ENCODE measurements at regions of chr15 and their contacts with region 1.

Region 1: DNA sequence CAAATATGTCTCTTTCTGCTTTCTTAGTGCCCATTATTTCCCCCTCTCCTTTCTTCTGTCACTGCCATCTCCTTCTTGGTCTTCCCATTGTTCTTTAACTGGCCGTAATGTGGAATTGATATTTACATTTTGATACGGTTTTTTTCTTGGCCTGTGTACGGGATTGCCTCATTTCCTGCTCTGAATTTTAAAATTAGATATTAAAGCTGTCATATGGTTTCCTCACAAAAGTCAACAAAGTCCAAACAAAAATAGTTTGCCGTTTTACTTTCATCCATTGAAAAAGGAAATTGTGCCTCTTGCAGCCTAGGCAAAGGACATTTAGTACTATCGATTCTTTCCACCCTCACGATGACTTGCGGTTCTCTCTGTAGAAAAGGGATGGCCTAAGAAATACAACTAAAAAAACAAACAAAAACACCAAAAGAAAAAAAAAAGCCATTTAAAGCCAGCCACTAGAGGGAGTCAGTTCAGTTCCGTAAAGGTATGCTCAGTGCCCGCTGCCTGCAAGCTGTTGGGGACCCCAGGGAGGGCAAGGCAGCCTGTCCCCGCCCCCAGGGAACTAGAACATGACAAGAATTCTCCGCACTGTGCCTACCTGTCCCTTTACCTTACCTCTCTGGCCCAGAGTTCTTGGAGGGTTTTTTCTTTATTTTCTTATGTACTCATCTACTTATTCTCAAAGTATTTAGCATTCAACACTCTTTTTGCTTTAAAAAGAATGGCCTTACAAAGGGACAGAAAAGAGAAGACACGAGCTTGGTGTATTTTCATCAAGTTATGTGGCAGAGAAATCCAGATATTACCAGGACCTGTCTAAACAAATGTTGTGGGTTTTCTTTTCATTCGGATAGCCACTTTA is 30.0 kb upstream of the NR2E3 start:
- DNase-seq: no peak
- ATAC-seq: peak in 3 of 4 donors; percentile 19 to 34 (median 25)
- H3K4me3 ChIP-seq: peak overlapping the region in 1 of 12 donors; percentile 18
- H3K27ac ChIP-seq: peak overlapping the region in 4 of 12 donors; percentile 6 to 55 (median 24)
- H3K4me1 ChIP-seq: peaks cover 0 to 37% (median 2%) of the 10 kb centered on the region in 12 donors
- H3K27me3 ChIP-seq: no peaks in the 10 kb centered on the region
- CTCF ChIP-seq: peak; percentile 48 to 76 (median 63)
- POLR2A ChIP-seq: no peak

Region 2: DNA sequence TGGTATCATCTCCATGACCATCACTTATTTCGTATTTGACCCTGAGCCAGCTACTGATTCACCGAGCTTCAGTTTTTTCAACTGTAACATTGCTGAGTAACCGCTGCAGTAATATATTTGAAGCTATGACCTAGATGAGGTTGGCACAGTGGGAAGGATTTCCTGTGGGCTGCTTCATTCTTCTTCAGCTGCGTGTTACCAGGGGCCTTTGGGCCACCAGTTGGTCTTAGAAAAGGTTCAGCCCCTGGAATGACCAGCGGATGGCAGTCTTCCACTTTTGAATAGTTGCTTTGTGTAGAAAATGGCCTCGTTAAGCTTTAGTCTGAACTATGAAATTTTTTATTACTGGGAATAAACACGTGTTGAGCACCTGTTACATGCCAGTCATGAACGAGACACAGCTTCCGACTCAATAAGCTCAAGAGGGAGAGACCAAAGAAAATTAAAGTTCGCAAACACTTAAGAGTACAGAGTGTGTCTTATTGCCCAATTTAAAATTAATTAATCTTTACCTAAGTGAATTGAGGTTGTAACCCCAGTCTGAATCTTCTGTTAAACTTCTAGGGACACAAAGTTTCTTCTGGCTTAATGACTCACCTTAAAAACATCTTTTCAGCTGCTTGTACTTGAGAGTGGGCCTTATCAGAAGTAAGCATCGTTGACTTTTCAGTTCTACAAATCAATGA is 27.6 kb before region 1 on chr15:
- intact Hi-C with region 1: loop called in 1 of 10 experiments (anchors 5 kb)
- DNase-seq: no peak
- ATAC-seq: peak in 2 of 4 donors; percentile 35 to 59
- H3K4me3 ChIP-seq: no peak overlapping the region
- H3K27ac ChIP-seq: no peak overlapping the region
- H3K4me1 ChIP-seq: peaks cover 0 to 20% (median 3%) of the 10 kb centered on the region in 12 donors
- H3K27me3 ChIP-seq: no peaks in the 10 kb centered on the region
- CTCF ChIP-seq: peak in 10 of 12 donors; percentile 16 to 56 (median 31)
- POLR2A ChIP-seq: no peak

Region 3: DNA sequence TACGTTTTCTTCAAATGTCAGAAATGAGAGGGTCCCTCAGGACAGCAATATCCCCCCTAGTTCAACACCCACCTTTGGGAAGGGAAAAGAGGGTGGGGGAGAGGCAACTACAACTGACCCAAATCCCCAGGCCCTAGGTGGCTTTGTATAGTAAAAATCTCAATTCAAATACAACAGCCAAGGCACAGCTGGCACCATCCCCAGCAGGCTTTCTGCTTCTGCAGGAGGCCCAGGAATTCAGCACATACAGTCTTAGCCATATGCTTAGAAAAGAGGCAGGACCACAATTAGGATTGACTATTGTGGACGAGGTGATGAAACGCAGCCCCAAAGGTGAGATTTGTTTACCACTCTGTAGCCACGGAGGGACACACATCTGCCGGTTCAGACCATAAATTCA is 45.9 kb after region 1 on chr15:
- intact Hi-C with region 1: no loop called
- DNase-seq: no peak
- ATAC-seq: no peak
- H3K4me3 ChIP-seq: no peak overlapping the region
- H3K27ac ChIP-seq: no peak overlapping the region
- H3K4me1 ChIP-seq: no peaks in the 10 kb centered on the region
- H3K27me3 ChIP-seq: no peaks in the 10 kb centered on the region
- CTCF ChIP-seq: no peak
- POLR2A ChIP-seq: no peak

Measured in heart left ventricle (tissue), 16 donors.